ENCODE measurements at regions of chr12 and their contacts with region 1.

Region 1: DNA sequence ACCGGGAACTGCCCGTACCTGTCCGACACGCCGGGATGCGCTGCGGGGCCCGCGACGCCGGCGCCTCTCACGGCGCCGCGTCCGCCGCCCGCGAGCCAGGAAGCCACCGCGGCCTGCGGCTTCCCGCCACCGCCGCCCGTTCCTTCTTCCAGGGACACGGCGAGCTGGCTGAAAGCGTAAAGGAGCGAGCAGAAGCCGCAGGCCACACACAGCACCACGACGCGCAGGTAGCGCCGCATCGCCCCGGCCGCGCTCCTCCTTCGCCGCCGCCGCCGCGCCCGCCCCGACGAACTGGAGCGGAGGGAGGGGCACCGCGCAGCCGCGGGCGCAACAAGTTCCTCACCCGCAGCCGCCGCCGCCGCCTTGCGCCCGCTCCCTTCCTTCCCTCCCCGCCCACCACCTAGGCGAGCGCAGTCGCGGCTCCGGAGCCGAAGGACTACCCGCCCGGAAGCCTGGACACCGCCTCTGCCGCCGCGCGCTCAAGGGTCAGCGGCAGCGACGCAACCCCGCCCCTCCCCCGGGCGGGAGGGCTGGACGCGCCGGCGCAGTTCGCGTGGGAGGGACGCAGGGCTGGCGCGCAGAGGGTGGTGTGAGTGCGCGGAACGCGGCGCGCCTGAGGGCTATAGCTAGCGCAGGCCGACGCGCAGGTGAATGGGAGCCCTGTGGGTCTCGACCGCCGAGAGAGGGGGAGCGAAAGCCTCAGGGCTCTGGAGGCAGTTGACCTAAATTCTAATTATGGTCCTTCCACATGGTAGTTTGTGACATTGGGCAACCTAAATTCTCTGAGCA is at the start of gene GXYLT1:
- DNase-seq: peak; percentile 80
- H3K4me3 Mint-ChIP-seq: peak within 1 kb of the TSS; percentile 90
- H3K27ac Mint-ChIP-seq: peak within 1 kb of the TSS; percentile 90
- H3K4me1 Mint-ChIP-seq: peaks cover 37% of the 10 kb centered on the region
- H3K27me3 Mint-ChIP-seq: peaks cover 4% of the 10 kb centered on the region
- total RNA-seq, gene GXYLT1: 10.5 and 11.4 TPM in 2 replicates

Region 2: DNA sequence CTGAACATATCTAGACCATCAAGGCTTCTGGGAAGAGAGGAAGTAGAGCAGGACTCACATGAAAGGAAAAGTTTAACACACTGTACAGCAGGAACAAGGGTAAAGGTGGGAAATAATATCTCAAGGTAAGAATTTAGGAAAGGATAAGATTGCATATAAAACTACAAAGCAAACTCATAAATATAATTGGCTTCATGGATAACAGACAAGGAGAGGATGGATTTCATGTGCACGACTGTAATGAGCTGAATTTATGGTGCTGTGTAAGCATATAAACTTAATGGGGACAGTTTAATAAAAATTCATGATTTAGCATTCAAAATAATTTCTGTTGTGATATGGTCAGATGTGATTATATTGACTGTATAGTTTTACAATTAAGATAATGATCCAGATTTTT is 297.9 kb before region 1 on chr12:
- intact Hi-C with region 1: no loop called
- DNase-seq: no peak
- H3K4me3 Mint-ChIP-seq: no peak overlapping the region
- H3K27ac Mint-ChIP-seq: no peak overlapping the region
- H3K4me1 Mint-ChIP-seq: no peaks in the 10 kb centered on the region
- H3K27me3 Mint-ChIP-seq: no peaks in the 10 kb centered on the region

Region 3: DNA sequence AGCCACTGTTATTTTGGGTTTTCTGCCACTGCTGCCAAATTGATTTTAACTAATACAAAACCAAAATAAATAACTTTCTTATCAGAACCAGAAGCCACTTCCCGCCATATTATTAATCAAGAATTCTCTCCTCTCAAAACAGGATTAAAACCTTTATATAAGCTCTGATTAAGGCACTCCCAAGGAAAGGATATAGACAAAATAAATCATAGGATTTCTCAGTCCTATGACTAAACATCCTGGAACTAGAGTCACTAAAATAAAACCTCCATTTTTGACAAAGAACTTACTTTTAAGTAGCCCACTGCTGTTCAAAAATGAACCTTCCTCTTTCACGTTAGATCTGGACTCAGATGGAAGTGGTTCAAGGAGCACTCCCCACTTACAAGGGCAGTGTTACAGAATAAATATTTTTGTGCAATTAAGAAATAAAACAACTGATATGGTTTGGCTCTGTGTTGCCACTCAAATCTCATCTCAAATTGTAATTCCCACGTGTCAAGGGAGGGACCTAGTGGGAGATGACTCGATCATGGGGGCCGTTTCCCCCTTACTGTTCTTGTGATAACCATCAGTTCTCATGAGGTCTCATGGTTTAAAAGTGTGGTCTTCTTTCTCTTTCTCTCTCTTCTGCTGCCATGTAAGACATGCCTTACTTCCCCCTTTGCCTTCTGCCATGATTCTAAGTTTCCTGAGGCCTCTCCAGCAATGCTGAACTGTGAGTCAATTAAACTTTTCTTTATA is 26.3 kb before region 1 on chr12:
- intact Hi-C with region 1: no loop called
- DNase-seq: no peak
- H3K4me3 Mint-ChIP-seq: no peak overlapping the region
- H3K27ac Mint-ChIP-seq: peak overlapping the region; percentile 67
- H3K4me1 Mint-ChIP-seq: peaks cover 23% of the 10 kb centered on the region
- H3K27me3 Mint-ChIP-seq: no peaks in the 10 kb centered on the region

Region 4: GRCh38 chr12:42237052-42237852 is 92.7 kb after region 1 on chr12:
- intact Hi-C with region 1: loop called (anchors 1 kb)
- DNase-seq: peak; percentile 68
- H3K4me3 Mint-ChIP-seq: peak overlapping the region; percentile 87
- H3K27ac Mint-ChIP-seq: peak overlapping the region; percentile 83
- H3K4me1 Mint-ChIP-seq: peaks cover 46% of the 10 kb centered on the region
- H3K27me3 Mint-ChIP-seq: no peaks in the 10 kb centered on the region

Region 5: DNA sequence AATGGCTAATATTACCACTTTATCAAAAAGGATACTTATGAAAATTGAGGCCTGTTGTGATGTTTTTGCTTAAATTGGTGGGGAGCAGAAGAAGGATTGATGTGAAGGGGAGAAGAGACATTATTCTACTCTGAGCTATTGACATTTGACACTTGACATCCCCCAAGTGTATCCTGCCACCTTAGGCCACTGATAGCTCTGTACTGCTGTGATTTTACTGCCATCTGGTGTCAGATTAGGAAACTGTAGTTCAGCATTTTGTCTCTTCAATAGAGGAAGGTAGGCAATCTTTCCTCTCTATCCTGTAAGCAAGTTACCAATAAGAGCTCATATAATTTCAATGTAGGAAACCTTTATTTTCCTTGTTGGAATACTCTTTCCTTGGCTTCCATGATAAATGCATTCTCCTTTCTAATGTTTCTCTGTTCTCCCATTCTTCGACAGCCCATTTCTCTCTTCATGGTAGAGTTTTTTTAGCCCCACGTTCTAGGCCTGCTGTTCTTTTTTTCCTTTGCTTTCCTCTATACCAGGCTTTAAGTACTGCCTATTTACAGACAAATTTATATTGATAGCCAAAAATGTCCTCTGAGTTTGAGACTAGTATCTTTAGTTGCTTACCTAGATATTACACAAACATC is 227.7 kb after region 1 on chr12:
- intact Hi-C with region 1: loop called (anchors 5 kb)
- DNase-seq: peak; percentile 12
- H3K4me3 Mint-ChIP-seq: no peak overlapping the region
- H3K27ac Mint-ChIP-seq: no peak overlapping the region
- H3K4me1 Mint-ChIP-seq: no peaks in the 10 kb centered on the region
- H3K27me3 Mint-ChIP-seq: no peaks in the 10 kb centered on the region

Region 6: GRCh38 chr12:42589465-42590329 is 445.1 kb after region 1 on chr12 and contains the start of gene PRICKLE1:
- intact Hi-C with region 1: loop called (anchors 5 kb)
- DNase-seq: peak; percentile 6
- H3K4me3 Mint-ChIP-seq: peak within 1 kb of the TSS; percentile 72
- H3K27ac Mint-ChIP-seq: peak within 1 kb of the TSS; percentile 43
- H3K4me1 Mint-ChIP-seq: peaks cover 20% of the 10 kb centered on the region
- H3K27me3 Mint-ChIP-seq: peaks cover 61% of the 10 kb centered on the region
- total RNA-seq, gene PRICKLE1: 0.34 TPM in 1 of 2 replicates, not detected in the other